ENCODE measurements at regions of chr6 and their contacts with region 1.

Region 1: DNA sequence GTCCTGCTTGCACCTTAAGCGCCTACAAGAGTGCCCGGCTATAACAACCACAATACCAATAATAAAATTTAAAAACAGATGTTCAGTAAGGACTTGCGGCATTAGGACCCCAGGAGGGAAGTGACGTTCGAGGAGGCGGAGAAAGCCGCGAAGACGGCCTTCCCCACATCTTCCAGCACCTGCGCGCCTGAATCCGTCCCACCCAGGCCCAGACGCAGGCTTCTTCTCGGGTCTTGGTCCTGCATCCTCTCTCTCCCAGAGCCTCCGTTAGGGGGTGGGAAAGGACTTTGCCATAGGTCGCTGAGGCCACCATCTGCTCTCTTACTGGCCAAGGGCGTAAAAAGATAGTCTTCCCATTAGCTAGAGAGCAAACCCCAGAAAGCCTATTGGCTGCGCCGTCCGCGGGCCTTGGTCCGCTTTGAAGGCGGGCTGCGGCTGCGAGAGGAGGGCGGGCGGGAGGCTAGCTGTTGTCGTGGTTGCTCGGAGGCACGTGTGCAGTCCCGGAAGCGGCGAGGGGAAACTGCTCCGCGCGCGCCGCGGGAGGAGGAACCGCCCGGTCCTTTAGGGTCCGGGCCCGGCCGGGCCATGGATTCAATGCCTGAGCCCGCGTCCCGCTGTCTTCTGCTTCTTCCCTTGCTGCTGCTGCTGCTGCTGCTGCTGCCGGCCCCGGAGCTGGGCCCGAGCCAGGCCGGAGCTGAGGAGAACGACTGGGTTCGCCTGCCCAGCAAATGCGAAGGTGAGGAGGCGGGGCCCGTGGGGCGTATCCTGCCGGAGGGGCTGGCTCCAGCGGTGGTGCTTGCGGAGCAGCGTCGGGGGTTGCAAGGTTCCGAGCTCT is at the start of gene CNPY3:
- DNase-seq: peak; percentile 98 to 99 (median 99)
- H3K4me3 ChIP-seq: peak within 1 kb of the TSS; percentile 77 to 94 (median 85)
- H3K27ac ChIP-seq: peak within 1 kb of the TSS; percentile 93 to 98
- H3K4me1 ChIP-seq: peaks cover 18 to 54% (median 42%) of the 10 kb centered on the region in 4 experiments
- H3K27me3 ChIP-seq: no peaks in the 10 kb centered on the region

Region 2: GRCh38 chr6:42915732-42916131 is 13.5 kb before region 1 on chr6 and contains the start of gene PTCRA:
- CTCF ChIA-PET with region 1: interaction called, 16 read pairs
- POLR2A ChIA-PET with region 1: interaction called, 4 read pairs
- DNase-seq: peak in 1 of 3 donors; percentile 9
- H3K4me3 ChIP-seq: no peak within 1 kb of the TSS
- H3K27ac ChIP-seq: no peak within 1 kb of the TSS
- H3K4me1 ChIP-seq: peaks cover 0 to 7% (median 5%) of the 10 kb centered on the region in 4 experiments
- H3K27me3 ChIP-seq: peaks cover 0 to 5% (median 0%) of the 10 kb centered on the region in 5 experiments

Region 3: DNA sequence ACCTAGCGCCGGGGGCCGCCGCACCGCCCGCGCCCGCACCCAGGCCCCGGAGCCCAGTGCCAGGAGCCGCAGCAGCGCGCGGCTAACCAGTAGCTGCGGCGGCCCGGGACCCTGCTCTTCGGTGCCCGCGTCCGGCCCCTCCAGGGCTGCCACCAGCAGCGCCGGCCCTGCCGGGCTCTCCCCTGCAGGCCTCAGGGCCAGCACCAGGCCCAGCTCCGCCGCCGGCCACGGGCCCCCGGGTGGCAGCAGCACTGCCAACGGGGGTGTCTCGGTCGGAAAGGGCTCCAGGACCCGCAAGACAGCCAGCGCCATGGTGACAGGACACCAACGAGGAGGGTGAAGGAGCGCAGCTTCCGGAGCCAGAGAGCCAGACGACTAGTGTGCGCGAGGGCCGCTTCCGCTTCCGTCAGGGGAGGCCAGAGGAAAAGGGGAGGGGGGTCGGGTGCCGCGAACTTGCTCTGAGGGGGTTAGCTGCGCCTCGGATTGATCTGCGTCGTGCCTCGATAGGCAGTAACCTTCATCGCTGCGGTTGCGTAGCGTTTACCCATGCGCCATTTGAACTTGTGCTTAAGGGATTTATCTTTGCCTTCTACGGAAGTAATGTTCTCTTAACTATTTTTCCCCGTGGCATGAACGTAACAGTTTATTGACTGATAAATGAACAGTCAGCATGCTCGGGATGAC is 49.8 kb after region 1 on chr6 and contains the start of gene PEX6:
- CTCF ChIA-PET with region 1: interaction called, 3 read pairs
- POLR2A ChIA-PET with region 1: interaction called, 13 read pairs
- DNase-seq: peak; percentile 92 to 95 (median 94)
- H3K4me3 ChIP-seq: peak within 1 kb of the TSS; percentile 80 to 97 (median 91)
- H3K27ac ChIP-seq: peak within 1 kb of the TSS; percentile 66 to 88
- H3K4me1 ChIP-seq: peaks cover 9 to 25% (median 24%) of the 10 kb centered on the region in 4 experiments
- H3K27me3 ChIP-seq: no peaks in the 10 kb centered on the region